CD8-positive, alpha-beta memory T cell (primary cell): ENCODE measurements at regions of chr16 and their contacts with region 1.

Region 1: GRCh38 chr16:57609541-57610401 is 18.7 kb upstream of the ADGRG1 start:
- DNase-seq: peak; percentile 37 to 84 (median 44)
- H3K4me3 ChIP-seq: peak overlapping the region; percentile 44
- H3K4me3 Mint-ChIP-seq: peak overlapping the region; percentile 31 to 87 (median 82)
- H3K27ac ChIP-seq: peak overlapping the region; percentile 57
- H3K27ac Mint-ChIP-seq: peak overlapping the region; percentile 90 to 98 (median 95)
- H3K4me1 ChIP-seq: peaks cover 33% of the 10 kb centered on the region
- H3K4me1 Mint-ChIP-seq: peaks cover 67 to 88% (median 69%) of the 10 kb centered on the region in 3 donors
- H3K27me3 ChIP-seq: no peaks in the 10 kb centered on the region
- H3K27me3 Mint-ChIP-seq: no peaks in the 10 kb centered on the region

Region 2: DNA sequence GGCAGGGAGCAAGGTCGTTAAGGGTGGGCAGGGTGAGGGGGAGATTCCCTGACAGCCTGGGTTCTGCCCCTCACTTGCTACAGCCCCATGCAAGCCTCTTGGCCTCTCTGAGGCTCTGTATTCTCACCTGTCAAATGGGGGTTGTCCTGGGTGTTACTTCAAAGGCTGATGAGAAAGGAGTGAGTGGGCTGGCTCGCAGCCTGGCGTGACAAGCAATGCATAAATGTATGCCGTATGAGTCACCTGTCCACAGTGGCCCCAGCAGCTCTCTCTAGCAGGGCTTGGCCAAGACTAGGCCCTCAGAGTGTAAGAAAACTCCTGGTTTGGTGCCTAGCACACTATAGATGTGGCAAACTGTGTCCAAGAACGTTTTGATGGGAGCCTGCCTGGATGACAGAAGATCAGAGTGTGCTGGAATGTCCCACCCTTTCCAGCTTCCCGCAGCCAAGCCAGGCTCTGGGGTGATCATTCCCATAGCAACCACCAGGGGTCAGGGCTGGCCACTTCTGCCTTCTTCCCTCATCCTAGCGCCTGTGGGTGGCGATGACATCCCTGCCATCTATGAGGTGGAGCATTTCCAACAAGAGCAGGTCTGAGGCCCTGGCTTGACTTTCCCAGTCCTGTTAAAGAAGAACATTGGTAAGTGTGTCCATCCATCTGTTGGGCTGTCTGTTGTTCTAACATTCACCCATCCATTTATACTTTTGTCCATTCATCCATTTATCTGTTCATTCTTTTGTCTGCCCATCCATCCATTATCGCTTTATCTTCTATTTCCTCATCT is 18.5 kb before region 1 on chr16:
- CTCF ChIA-PET with region 1: interaction called, 16 read pairs
- POLR2A ChIA-PET with region 1: interaction called, 8 read pairs
- DNase-seq: peak in 4 of 5 donors; percentile 50 to 80 (median 53)
- H3K4me3 ChIP-seq: no peak overlapping the region
- H3K4me3 Mint-ChIP-seq: peak overlapping the region in 6 of 7 donors; percentile 73 to 87 (median 79)
- H3K27ac ChIP-seq: no peak overlapping the region
- H3K27ac Mint-ChIP-seq: peak overlapping the region; percentile 75 to 97 (median 94)
- H3K4me1 ChIP-seq: peaks cover 37% of the 10 kb centered on the region
- H3K4me1 Mint-ChIP-seq: peaks cover 62 to 74% (median 69%) of the 10 kb centered on the region in 3 donors
- H3K27me3 ChIP-seq: no peaks in the 10 kb centered on the region
- H3K27me3 Mint-ChIP-seq: no peaks in the 10 kb centered on the region

Region 3: DNA sequence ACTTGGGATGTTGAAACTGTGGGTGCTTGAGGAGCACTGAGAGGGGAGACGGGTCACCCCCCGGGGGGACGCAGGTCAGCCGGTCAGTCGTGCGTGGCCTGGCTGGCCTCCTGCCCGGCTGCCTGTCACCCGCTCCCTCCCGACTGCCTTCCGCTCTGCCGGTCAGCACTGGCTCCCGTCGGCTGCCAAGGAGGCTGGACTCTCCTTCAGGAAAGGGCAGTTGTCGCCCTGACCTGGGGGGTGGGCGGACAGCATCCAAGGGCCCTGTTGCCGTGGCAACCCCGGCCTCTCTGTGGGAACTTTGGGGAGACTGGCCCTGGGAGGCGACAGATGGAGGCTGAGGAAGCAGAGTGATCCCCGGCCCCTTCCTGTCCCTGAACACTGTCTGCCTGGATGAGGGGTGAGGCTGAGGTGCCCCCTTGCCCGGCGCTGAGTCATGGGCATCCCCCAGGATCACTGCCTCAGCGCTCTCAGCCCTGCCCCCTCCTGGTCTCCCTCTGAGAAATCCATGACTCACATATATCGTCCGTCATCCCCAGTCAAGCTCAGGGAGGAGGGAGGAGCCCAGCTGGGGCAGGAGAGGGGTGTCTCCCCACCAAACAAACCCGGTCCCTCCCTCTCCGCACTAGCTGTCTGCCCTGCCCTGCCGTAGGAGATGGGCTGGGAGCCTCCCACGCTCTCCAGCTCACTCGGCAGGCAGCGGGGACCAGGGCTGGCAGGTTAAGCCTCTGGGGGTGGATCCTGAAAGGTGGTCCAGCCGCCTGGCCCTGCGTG is 18.4 kb after region 1 on chr16 and contains the start of gene ADGRG1:
- CTCF ChIA-PET with region 1: interaction called, 10 read pairs
- POLR2A ChIA-PET with region 1: no interaction called
- DNase-seq: peak in 2 of 5 donors; percentile 22 to 64
- H3K4me3 ChIP-seq: peak within 1 kb of the TSS; percentile 13
- H3K4me3 Mint-ChIP-seq: peak within 1 kb of the TSS; percentile 43 to 73 (median 68)
- H3K27ac ChIP-seq: peak within 1 kb of the TSS; percentile 20
- H3K27ac Mint-ChIP-seq: peak within 1 kb of the TSS in 5 of 8 donors; percentile 12 to 95 (median 69)
- H3K4me1 ChIP-seq: peaks cover 4% of the 10 kb centered on the region
- H3K4me1 Mint-ChIP-seq: peaks cover 7 to 32% (median 22%) of the 10 kb centered on the region in 3 donors
- H3K27me3 ChIP-seq: peaks cover 4% of the 10 kb centered on the region
- H3K27me3 Mint-ChIP-seq: peaks cover 1 to 11% of the 10 kb centered on the region in 2 donors
- total RNA-seq, gene ADGRG1: 25.8 to 29.8 TPM